ENCODE measurements at regions of chr5 and their contacts with region 1.

Region 1: DNA sequence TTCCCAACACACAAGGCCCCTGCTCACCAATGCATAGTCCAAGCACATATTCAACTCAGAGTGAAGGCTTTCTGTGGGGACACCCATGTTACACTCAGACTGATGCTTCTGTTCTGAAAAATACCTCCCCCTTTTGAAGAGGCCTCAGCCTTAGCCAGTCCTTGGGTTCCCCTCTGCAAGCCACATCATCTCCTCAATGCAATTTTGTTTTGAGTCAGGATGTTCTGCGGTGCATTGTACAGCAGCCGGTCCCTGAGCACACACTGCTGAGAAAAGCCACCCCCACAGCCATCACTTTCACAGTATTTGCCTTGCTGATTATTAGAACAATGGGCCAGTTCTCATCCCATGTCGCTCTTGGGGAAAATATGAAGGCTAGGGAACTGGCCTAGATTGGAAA is 241.2 kb downstream of the FAM114A2 start:
- DNase-seq: no peak
- H3K4me3 ChIP-seq: no peak overlapping the region
- H3K27ac ChIP-seq: no peak overlapping the region
- H3K4me1 ChIP-seq: no peaks in the 10 kb centered on the region
- CTCF ChIP-seq: no peak

Region 2: DNA sequence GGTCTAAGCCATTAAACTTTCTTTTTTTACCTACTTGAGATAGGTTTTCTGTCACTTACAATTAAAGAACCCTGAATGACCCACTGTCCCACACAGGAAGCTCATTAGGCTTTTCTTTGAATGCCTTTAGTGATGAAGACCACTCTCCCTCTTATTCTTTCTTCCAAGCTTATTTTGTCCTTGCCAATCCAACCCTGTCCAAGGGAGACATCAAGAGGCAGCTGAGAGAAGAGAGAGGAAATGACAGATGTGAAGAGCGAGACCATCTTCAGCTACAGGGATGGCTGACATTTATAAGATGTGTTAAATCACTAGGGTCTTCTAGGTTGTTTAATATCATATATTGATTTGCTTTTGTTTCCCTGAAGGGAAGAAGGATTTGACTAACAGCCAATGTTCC is 107.7 kb after region 1 on chr5:
- CTCF ChIA-PET with region 1: no interaction called
- POLR2A ChIA-PET with region 1: no interaction called
- intact Hi-C with region 1: loop called (anchors 5 kb)
- DNase-seq: peak; percentile 3
- H3K4me3 ChIP-seq: no peak overlapping the region
- H3K27ac ChIP-seq: no peak overlapping the region
- H3K4me1 ChIP-seq: no peaks in the 10 kb centered on the region
- CTCF ChIP-seq: no peak; the same call in none of the 2 replicates